Sciatic nerve (tissue), 2 donors: ENCODE measurements at regions of chr3 and their contacts with region 1.

Region 1: DNA sequence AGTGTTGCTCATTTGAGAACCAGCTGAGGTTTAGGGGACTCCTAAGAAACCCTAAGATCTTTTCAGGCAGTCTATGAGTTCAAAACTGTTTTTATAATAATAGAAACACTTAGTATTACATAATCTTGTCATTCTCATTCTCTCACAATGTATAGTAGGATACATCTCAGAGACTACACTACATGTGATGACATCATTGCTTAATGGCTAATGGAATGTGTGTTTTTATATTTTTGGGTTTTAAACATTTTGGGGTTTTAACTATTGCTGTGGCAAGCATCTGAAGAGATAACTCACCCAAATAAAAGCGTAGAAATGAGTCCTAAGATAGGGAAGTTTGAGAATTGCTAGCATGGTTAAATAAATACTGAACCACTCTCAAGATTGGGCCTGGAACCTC is 659.8 kb downstream of the PLOD2 start:
- DNase-seq: no peak
- ATAC-seq: no peak

Region 2: GRCh38 chr3:144341471-144341870 is 1159.8 kb before region 1 on chr3:
- intact Hi-C with region 1: loop called (anchors 5 kb)
- DNase-seq: no peak
- ATAC-seq: no peak

Region 3: GRCh38 chr3:145798692-145799537 is 297.7 kb after region 1 on chr3:
- intact Hi-C with region 1: no loop called
- DNase-seq: no peak
- ATAC-seq: peak; percentile 72